ENCODE measurements at regions of chr10 and their contacts with region 1.

Region 1: GRCh38 chr10:132575356-132576201 is 38.0 kb downstream of the INPP5A start:
- DNase-seq: no peak
- ATAC-seq: no peak
- H3K4me3 ChIP-seq: no peak overlapping the region
- H3K27ac ChIP-seq: no peak overlapping the region
- H3K4me1 ChIP-seq: peaks cover 21 to 55% of the 10 kb centered on the region in 2 experiments
- H3K27me3 ChIP-seq: no peaks in the 10 kb centered on the region
- CTCF ChIP-seq: no peak
- EP300 ChIP-seq: no peak
- POLR2A ChIP-seq: no peak
- RAD21 ChIP-seq: no peak

Region 2: GRCh38 chr10:132458593-132459300 is 116.8 kb before region 1 on chr10:
- CTCF ChIA-PET with region 1: interaction called, 3 read pairs
- POLR2A ChIA-PET with region 1: interaction called, 3 read pairs
- in situ Hi-C with region 1: no loop called
- intact Hi-C with region 1: loop called (anchors 2 kb)
- DNase-seq: peak; percentile 49 to 68 (median 62)
- ATAC-seq: peak; percentile 85
- H3K4me3 ChIP-seq: no peak overlapping the region
- H3K27ac ChIP-seq: no peak overlapping the region
- H3K4me1 ChIP-seq: peaks cover 4 to 68% of the 10 kb centered on the region in 2 experiments; a peak in 3 of 5 replicates
- H3K27me3 ChIP-seq: peaks cover 0 to 29% of the 10 kb centered on the region in 2 experiments; a peak in 2 of 5 replicates
- CTCF ChIP-seq: peak; percentile 65 to 83 (median 65)
- EP300 ChIP-seq: no peak
- POLR2A ChIP-seq: no peak
- RAD21 ChIP-seq: peak; percentile 85

Region 3: DNA sequence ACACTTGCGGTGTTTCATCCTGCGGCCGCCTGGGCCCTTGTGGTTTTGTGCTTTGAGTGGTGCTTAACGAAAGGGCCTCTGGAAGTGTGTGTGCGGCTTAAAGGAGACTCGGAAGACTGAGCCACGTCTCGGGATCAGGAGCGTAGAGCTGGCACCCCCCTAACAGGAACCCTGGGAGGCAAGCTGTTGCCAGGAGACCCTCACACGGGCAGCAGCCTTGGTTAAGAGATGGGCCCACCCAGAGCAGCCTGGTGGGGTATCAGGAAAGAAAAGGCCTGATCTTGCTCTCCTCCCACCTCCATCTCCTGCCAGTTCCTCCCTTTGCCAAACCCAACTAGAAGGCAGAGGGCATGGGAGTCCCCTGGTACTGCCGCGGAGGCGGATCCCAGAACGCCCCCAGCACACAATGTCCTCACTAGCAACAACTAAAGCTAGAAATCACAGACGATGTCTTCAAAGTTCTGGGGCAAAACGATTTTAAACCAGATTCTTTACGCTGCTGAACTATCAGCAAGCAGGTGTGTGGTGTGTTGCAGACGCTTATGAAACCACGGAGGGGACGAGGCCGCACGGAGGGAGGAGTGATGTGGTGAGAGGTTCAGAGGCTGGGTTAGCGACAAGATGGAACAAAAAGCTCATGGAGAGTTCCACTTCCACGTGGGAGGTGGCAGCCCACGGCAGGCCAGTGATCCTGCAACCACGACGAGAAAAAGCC is 105.0 kb before region 1 on chr10:
- CTCF ChIA-PET with region 1: no interaction called
- POLR2A ChIA-PET with region 1: no interaction called
- in situ Hi-C with region 1: loop called (anchors 5 kb)
- intact Hi-C with region 1: no loop called
- DNase-seq: no peak
- ATAC-seq: no peak
- H3K4me3 ChIP-seq: no peak overlapping the region
- H3K27ac ChIP-seq: no peak overlapping the region
- H3K4me1 ChIP-seq: peaks cover 0 to 13% of the 10 kb centered on the region in 2 experiments; a peak in 2 of 5 replicates
- H3K27me3 ChIP-seq: peaks cover 0 to 14% of the 10 kb centered on the region in 2 experiments; a peak in 2 of 5 replicates
- CTCF ChIP-seq: no peak
- EP300 ChIP-seq: no peak
- POLR2A ChIP-seq: no peak
- RAD21 ChIP-seq: no peak

Measured in K562 (cell line).